ENCODE measurements at regions of chr13 and their contacts with region 1.

Region 1: DNA sequence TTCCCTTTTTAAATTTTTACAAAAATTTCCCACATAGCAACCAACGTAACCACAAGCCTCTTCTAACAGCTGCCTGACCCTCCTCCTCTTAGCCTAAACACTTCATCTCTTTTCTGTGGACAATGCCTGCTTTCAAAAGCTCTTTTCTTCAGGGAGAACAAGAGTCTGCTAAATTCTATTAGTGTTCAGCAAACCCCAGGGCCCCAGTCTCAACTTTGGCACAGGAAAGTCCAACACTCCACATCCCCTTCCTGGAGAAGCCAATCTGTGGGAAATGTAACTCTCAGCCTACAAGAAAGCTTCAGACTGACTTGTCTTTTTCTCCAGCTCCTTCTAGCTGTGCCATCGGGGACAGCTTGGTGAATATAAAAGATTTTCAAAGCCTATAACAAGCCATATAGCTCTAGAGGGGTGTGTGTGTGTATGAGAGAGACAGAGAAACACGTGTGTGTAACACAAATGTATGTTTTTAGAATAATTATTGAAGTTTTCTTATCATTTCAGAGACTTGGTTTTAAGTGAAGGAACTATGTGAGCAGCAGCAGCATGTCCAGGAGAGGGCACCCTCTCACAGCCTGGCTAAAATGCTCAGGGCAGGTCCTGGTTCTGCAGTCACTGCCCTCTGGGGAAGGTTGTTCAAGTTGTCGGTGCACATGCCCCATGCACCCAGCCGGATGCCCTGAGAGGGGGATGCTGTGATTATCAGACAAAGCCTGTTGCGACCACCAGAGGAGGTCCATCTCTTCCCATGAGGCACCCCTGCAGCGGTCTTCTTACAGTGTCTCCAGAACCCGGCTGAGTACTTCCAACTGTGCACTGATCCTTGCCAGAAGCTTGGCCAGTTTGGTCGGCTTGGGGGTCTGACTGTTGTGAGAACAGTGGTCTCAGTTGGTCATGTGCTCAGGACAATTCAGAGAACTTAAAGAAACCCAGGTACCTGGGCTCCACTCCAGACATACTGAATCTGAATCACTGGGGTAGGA is 34.4 kb downstream of the CCDC70 start:
- DNase-seq: peak; percentile 69
- ATAC-seq: peak; percentile 78
- H3K4me3 Mint-ChIP-seq: no peak overlapping the region
- H3K27ac Mint-ChIP-seq: no peak overlapping the region
- H3K4me1 Mint-ChIP-seq: no peaks in the 10 kb centered on the region
- H3K27me3 Mint-ChIP-seq: peaks cover 5% of the 10 kb centered on the region

Region 2: GRCh38 chr13:51923983-51924539 is 27.9 kb after region 1 on chr13:
- CTCF ChIA-PET with region 1: no interaction called
- POLR2A ChIA-PET with region 1: no interaction called
- intact Hi-C with region 1: loop called in 1 of 2 experiments (anchors 1 kb)
- DNase-seq: peak; percentile 40
- ATAC-seq: peak; percentile 70
- H3K4me3 Mint-ChIP-seq: no peak overlapping the region
- H3K27ac Mint-ChIP-seq: no peak overlapping the region
- H3K4me1 Mint-ChIP-seq: peaks cover 16% of the 10 kb centered on the region
- H3K27me3 Mint-ChIP-seq: peaks cover 2% of the 10 kb centered on the region